ENCODE measurements at regions of chr20 and their contacts with region 1.

Region 1: GRCh38 chr20:23753589-23753988 is 2.9 kb upstream of the CST1 start:
- DNase-seq: no peak
- H3K4me3 ChIP-seq: no peak overlapping the region
- H3K4me3 Mint-ChIP-seq: no peak overlapping the region
- H3K27ac Mint-ChIP-seq: peak overlapping the region; percentile 84
- H3K4me1 ChIP-seq: peaks cover 46% of the 10 kb centered on the region
- H3K4me1 Mint-ChIP-seq: peaks cover 47% of the 10 kb centered on the region
- H3K27me3 ChIP-seq: no peaks in the 10 kb centered on the region
- H3K27me3 Mint-ChIP-seq: no peaks in the 10 kb centered on the region
- CTCF ChIP-seq: no peak

Region 2: DNA sequence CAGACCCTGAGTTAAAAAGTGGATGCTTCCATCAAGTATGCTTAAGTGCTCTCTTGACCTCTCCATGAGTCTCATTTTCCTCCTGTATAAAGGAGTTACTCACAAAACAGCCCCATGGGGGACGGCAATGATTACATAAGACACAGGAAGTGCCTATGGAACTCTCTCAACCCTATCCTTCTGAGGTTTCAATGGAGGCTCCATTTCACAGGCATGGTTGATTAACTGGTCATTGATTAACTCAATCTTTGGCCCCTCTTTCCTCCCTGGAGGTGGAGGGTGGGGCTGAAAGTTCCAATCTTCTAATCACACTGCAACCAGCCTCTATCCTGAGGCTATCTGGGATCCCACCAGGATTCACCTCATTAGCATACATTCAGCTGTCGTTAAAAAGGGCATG is 233.4 kb before region 1 on chr20:
- CTCF ChIA-PET with region 1: no interaction called
- POLR2A ChIA-PET with region 1: no interaction called
- intact Hi-C with region 1: no loop called
- DNase-seq: no peak
- H3K4me3 ChIP-seq: no peak overlapping the region
- H3K4me3 Mint-ChIP-seq: no peak overlapping the region
- H3K27ac Mint-ChIP-seq: no peak overlapping the region
- H3K4me1 ChIP-seq: no peaks in the 10 kb centered on the region
- H3K4me1 Mint-ChIP-seq: no peaks in the 10 kb centered on the region
- H3K27me3 ChIP-seq: no peaks in the 10 kb centered on the region
- H3K27me3 Mint-ChIP-seq: peaks cover 3% of the 10 kb centered on the region
- CTCF ChIP-seq: no peak

Region 3: DNA sequence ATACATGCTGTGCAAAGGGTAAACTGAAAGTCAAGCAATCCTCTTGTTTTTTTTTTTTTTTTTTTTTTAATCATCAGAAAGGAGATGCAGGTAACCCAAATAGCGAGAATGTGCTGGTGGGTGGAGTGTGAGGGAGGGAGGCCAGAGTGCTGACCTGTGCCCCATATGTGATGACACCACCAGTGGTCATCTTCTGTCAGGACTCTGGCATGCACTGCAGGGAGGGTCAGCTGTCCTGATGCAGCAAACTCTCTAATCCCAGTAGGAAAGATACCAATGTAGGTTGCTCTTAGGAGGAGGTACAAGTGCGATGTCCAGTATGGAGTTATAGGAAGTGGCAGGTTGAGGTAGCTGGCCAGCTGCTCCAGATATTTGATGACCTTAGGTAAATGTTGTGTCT is 61.9 kb before region 1 on chr20:
- CTCF ChIA-PET with region 1: no interaction called
- POLR2A ChIA-PET with region 1: no interaction called
- intact Hi-C with region 1: loop called (anchors 2 kb)
- DNase-seq: no peak
- H3K4me3 ChIP-seq: no peak overlapping the region
- H3K4me3 Mint-ChIP-seq: no peak overlapping the region
- H3K27ac Mint-ChIP-seq: peak overlapping the region; percentile 17
- H3K4me1 ChIP-seq: peaks cover 41% of the 10 kb centered on the region
- H3K4me1 Mint-ChIP-seq: peaks cover 41% of the 10 kb centered on the region
- H3K27me3 ChIP-seq: no peaks in the 10 kb centered on the region
- H3K27me3 Mint-ChIP-seq: no peaks in the 10 kb centered on the region
- CTCF ChIP-seq: no peak

Region 4: DNA sequence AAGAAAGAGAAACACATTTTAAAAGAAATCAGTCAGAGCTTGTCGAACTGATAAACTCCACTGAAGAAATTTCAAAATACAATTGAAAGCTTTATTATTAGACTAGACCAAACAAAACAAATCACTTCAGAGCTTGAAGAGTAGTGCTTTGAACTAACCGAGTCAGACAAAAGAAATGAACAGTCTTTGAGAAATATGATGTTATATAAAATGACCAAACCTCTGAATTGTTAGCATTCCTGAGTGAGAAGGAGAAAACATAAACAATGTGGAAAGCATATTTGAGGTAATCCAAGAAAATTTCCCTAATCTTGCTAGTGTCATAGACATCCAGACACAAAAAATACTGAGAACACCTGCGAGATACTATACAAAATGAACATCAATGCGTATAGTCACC is 51.6 kb before region 1 on chr20:
- CTCF ChIA-PET with region 1: no interaction called
- POLR2A ChIA-PET with region 1: no interaction called
- intact Hi-C with region 1: loop called (anchors 1 kb)
- DNase-seq: no peak
- H3K4me3 ChIP-seq: no peak overlapping the region
- H3K4me3 Mint-ChIP-seq: no peak overlapping the region
- H3K27ac Mint-ChIP-seq: no peak overlapping the region
- H3K4me1 ChIP-seq: peaks cover 28% of the 10 kb centered on the region
- H3K4me1 Mint-ChIP-seq: peaks cover 40% of the 10 kb centered on the region
- H3K27me3 ChIP-seq: no peaks in the 10 kb centered on the region
- H3K27me3 Mint-ChIP-seq: no peaks in the 10 kb centered on the region
- CTCF ChIP-seq: no peak

Region 5: GRCh38 chr20:23721962-23722361 is 31.6 kb before region 1 on chr20:
- CTCF ChIA-PET with region 1: no interaction called
- POLR2A ChIA-PET with region 1: no interaction called
- intact Hi-C with region 1: no loop called
- DNase-seq: no peak
- H3K4me3 ChIP-seq: no peak overlapping the region
- H3K4me3 Mint-ChIP-seq: no peak overlapping the region
- H3K27ac Mint-ChIP-seq: no peak overlapping the region
- H3K4me1 ChIP-seq: peaks cover 5% of the 10 kb centered on the region; the same call in 1 of the 2 replicates
- H3K4me1 Mint-ChIP-seq: peaks cover 13% of the 10 kb centered on the region
- H3K27me3 ChIP-seq: no peaks in the 10 kb centered on the region
- H3K27me3 Mint-ChIP-seq: no peaks in the 10 kb centered on the region
- CTCF ChIP-seq: no peak

Region 6: GRCh38 chr20:23988561-23988960 is 235.0 kb after region 1 on chr20 and contains the start of gene GGTLC1:
- CTCF ChIA-PET with region 1: no interaction called
- POLR2A ChIA-PET with region 1: no interaction called
- intact Hi-C with region 1: loop called (anchors 5 kb)
- DNase-seq: no peak
- H3K4me3 ChIP-seq: no peak within 1 kb of the TSS
- H3K4me3 Mint-ChIP-seq: no peak within 1 kb of the TSS
- H3K27ac Mint-ChIP-seq: no peak within 1 kb of the TSS
- H3K4me1 ChIP-seq: peaks cover 3% of the 10 kb centered on the region; the same call in 1 of the 2 replicates
- H3K4me1 Mint-ChIP-seq: peaks cover 7% of the 10 kb centered on the region
- H3K27me3 ChIP-seq: no peaks in the 10 kb centered on the region
- H3K27me3 Mint-ChIP-seq: no peaks in the 10 kb centered on the region
- CTCF ChIP-seq: no peak
- total RNA-seq, gene GGTLC1: 0.68 and 1.3 TPM in 2 replicates